ENCODE measurements at regions of chr12 and their contacts with region 1.

Region 1: GRCh38 chr12:8549381-8549780 is 8.7 kb upstream of the CLEC4E start:
- DNase-seq: no peak
- ATAC-seq: no peak
- H3K4me3 ChIP-seq: no peak overlapping the region
- H3K27ac ChIP-seq: no peak overlapping the region
- H3K4me1 ChIP-seq: no peaks in the 10 kb centered on the region
- H3K27me3 ChIP-seq: peaks cover 0 to 1% of the 10 kb centered on the region in 2 donors

Region 2: DNA sequence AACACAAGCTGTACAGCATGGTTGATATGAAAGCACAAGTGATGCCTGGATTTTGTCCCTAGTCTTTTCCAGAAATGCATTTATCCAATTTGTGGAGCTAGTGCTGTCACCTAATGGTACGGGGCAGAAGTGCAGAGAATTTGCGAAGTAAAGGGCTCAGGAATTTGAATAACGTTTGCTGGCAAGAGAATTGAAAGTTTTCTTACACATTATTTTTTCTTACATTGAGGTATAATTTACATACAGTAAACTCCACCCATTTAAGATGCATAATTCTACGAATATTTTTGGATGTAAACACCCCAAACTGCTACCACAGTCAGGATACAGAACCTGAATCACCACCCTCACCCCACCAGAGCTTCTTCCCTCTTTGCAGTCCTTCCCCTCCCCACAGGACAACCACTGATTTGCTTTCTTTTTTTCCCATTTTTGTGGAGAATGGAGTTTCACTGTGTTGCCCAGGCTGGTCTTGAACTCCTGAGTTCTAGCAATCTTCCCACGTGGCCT is 59.7 kb after region 1 on chr12:
- intact Hi-C with region 1: loop called (anchors 1 to 5 kb)
- DNase-seq: no peak
- ATAC-seq: no peak
- H3K4me3 ChIP-seq: no peak overlapping the region
- H3K27ac ChIP-seq: no peak overlapping the region
- H3K4me1 ChIP-seq: no peaks in the 10 kb centered on the region
- H3K27me3 ChIP-seq: no peaks in the 10 kb centered on the region

Measured in aorta (tissue), 5 donors.